ENCODE measurements at regions of chr4 and their contacts with region 1.

Region 1: DNA sequence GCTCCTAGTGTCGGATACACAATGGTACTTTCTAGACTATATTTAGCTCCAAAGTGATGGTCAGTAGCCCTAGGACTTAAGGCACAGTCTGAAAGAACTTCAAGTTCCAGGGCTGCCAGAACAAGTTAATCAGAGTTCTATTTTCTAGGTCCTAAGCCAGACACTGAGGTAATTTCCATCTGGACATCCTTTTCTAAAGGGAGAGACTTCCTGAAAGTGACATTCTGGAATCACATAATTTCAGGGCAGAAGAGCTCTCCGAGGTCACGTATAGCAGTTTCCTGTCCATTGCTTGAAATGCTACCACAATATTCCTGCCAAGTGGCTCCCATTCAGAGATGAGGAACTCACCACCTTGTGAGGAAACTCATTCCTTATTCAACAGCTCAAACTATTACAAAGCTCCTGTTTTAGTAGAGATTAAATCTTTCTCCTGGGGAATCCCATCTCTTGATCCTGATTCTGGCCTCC is 117.9 kb downstream of the COL25A1 start:
- DNase-seq: peak in 1 of 2 donors; percentile 61
- ATAC-seq: peak; percentile 74 to 98 (median 88)
- H3K4me3 ChIP-seq: no peak overlapping the region
- H3K27ac ChIP-seq: peak overlapping the region; percentile 25
- H3K4me1 ChIP-seq: peaks cover 4% of the 10 kb centered on the region
- H3K27me3 ChIP-seq: no peaks in the 10 kb centered on the region
- CTCF ChIP-seq: no peak

Region 2: DNA sequence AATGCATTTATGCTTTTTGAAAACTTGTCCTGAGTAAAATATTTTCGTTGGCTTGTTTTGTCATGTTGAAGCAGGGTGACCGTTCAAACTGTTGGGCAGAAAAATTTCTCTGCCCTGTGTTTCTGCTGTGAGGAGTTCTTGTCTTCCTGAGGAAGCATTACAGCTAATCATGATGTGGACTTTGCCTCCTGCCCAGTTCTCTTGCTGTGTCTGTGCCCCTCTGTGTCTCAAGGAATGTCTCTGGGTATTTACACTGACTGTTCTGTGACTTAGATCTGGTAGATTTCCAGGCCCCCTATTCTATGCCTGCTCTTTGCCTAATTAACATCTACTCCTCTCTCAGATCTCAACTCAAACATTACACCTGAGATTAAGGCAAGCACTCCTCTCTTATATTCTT is 594.6 kb before region 1 on chr4:
- intact Hi-C with region 1: no loop called
- DNase-seq: no peak
- ATAC-seq: no peak
- H3K4me3 ChIP-seq: no peak overlapping the region
- H3K27ac ChIP-seq: no peak overlapping the region
- H3K4me1 ChIP-seq: no peaks in the 10 kb centered on the region
- H3K27me3 ChIP-seq: no peaks in the 10 kb centered on the region
- CTCF ChIP-seq: no peak

Region 3: GRCh38 chr4:109164011-109164410 is 20.5 kb before region 1 on chr4:
- intact Hi-C with region 1: no loop called
- DNase-seq: no peak
- ATAC-seq: no peak
- H3K4me3 ChIP-seq: no peak overlapping the region
- H3K27ac ChIP-seq: no peak overlapping the region
- H3K4me1 ChIP-seq: no peaks in the 10 kb centered on the region
- H3K27me3 ChIP-seq: no peaks in the 10 kb centered on the region
- CTCF ChIP-seq: no peak

Region 4: DNA sequence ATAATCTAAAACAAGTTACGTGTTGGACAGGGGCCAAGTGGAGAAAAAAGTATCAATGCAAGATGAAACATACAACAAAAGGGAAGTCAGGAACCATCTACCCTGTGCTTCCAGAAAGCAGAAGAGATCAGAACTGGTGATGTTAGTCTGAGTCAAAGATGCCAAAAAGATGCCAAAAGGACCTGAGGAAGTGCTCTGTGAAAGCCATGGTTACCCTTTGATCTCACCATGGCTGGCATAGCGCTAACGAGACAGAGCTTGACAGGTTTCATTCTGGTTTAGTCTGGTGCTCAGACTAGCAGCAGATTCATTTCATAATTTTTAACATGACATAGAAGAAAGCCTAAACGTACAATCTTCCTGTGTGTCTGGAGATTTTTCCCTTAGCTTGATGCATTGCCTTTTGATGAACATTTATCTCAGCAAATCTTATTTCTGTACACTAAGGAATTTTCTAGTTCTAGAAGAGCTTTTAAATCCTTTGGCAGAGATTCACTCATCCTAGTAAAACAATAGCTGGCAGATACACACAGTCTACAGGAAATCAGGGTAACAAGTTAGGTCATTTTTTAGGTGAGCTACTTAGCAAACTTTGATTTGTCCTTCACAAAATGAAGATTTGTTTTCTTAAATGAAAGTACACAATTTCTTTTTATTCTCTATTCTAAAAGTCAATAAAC is 30.2 kb after region 1 on chr4:
- intact Hi-C with region 1: loop called in 1 of 2 experiments (anchors 2 kb)
- DNase-seq: no peak
- ATAC-seq: no peak
- H3K4me3 ChIP-seq: no peak overlapping the region
- H3K27ac ChIP-seq: no peak overlapping the region
- H3K4me1 ChIP-seq: no peaks in the 10 kb centered on the region
- H3K27me3 ChIP-seq: no peaks in the 10 kb centered on the region
- CTCF ChIP-seq: no peak